ENCODE measurements at regions of chr5 and their contacts with region 1.

Region 1: GRCh38 chr5:5421961-5422818 is at the start of gene ICE1:
- H3K4me3 Mint-ChIP-seq: no peak within 1 kb of the TSS
- H3K27ac Mint-ChIP-seq: peak within 1 kb of the TSS; percentile 96
- H3K4me1 Mint-ChIP-seq: peaks cover 18% of the 10 kb centered on the region
- H3K27me3 Mint-ChIP-seq: peaks cover 2% of the 10 kb centered on the region

Region 2: DNA sequence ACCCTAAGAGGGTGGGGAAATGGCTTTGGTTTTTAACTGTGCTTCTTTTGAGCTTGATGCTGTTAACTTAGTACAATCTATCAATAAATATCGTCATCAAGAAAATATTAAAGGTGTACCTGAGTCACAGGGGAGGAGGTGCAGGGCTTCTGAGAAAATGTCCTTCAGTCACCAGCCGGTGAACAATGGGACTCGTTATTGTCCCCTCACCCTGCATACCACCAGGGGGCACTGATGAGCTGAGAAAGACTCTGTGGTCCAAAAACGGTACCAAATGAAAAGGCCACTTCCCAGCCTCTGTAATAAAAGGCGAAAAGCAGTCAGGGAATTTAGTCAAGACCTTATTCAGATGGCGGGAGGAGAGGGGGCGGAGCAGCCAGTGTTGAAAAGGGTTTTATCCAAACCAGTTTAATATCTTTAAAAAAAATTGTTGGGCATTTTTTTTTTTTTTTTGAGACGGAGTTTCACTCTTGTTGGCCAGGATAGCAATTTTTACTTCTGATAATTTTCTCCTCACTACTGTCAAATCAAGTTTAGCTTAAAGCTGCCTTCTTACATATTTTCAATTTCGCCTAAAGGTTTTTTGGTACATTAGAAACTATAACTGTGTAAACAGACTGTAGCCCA is 554.0 kb before region 1 on chr5:
- intact Hi-C with region 1: loop called (anchors 10 kb)
- H3K4me3 Mint-ChIP-seq: no peak overlapping the region
- H3K27ac Mint-ChIP-seq: no peak overlapping the region
- H3K4me1 Mint-ChIP-seq: no peaks in the 10 kb centered on the region
- H3K27me3 Mint-ChIP-seq: no peaks in the 10 kb centered on the region

Region 3: GRCh38 chr5:5141625-5142532 is 280.3 kb before region 1 on chr5:
- intact Hi-C with region 1: loop called (anchors 1 kb)
- H3K4me3 Mint-ChIP-seq: no peak overlapping the region
- H3K27ac Mint-ChIP-seq: no peak overlapping the region
- H3K4me1 Mint-ChIP-seq: no peaks in the 10 kb centered on the region
- H3K27me3 Mint-ChIP-seq: peaks cover 27% of the 10 kb centered on the region

Region 4: DNA sequence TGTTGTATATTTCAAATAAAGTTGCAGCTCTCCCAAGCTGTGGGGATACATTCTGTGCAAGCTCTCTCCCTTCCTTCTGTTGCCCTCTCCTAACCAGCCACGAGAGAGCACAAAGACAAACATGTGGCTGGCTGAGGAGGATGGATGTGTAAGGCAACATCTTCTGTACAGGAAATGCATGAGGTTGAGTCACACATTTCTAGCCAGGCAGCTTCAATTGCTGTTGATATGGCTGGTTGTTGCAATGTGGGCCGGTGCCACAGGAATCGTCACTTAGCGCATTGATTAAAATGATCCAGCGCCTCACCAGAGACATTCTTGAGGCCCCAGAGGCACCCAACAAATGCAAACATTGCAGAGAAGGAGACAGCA is 207.4 kb after region 1 on chr5:
- intact Hi-C with region 1: no loop called
- H3K4me3 Mint-ChIP-seq: no peak overlapping the region
- H3K27ac Mint-ChIP-seq: no peak overlapping the region
- H3K4me1 Mint-ChIP-seq: no peaks in the 10 kb centered on the region
- H3K27me3 Mint-ChIP-seq: no peaks in the 10 kb centered on the region

Region 5: GRCh38 chr5:6632917-6633468 is 1210.8 kb after region 1 on chr5 and contains the starts of genes NSUN2 and SRD5A1:
- intact Hi-C with region 1: loop called (anchors 2 kb)
- H3K4me3 Mint-ChIP-seq: peak within 1 kb of the TSS; percentile 93
- H3K27ac Mint-ChIP-seq: peak within 1 kb of the TSS; percentile 98
- H3K4me1 Mint-ChIP-seq: peaks cover 40% of the 10 kb centered on the region
- H3K27me3 Mint-ChIP-seq: no peaks in the 10 kb centered on the region

Region 6: DNA sequence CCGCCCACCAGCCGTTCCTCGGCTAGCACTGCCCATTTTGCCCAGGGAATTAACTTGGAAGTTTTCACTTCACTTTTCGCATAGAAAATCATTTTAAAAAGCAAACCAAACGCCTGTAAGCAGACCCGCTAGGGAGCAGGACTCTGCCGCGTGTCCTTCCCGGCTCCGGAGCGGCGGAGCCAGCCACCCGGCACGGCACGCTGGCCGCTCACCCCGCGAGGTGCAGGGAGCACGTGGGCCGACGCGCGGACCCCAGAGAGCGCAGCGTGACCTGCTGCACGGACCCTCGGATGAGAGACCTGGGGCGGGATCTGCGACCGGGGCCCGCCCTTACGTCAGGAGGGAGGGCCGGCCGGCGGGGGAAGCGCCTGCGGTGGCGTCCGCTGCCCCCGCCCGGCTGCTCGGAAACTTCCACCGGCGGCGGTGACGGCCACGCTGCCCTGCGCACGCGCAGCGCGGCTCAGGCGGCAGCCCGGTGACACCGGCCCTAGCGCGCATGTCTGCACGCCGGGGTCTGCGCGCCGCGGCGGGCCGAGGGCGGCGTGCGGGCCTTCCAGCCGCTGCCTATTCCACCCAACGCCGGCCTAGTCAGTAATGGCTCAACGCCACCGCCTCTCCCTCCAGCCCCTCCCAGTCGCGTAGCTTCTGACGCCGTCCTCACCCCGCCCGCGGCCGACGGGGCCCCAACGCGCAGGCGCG is 1290.5 kb after region 1 on chr5:
- intact Hi-C with region 1: loop called (anchors 5 kb)
- H3K4me3 Mint-ChIP-seq: peak overlapping the region; percentile 84
- H3K27ac Mint-ChIP-seq: peak overlapping the region; percentile 93
- H3K4me1 Mint-ChIP-seq: peaks cover 42% of the 10 kb centered on the region
- H3K27me3 Mint-ChIP-seq: peaks cover 8% of the 10 kb centered on the region

Measured in dendritic cell treated with granulocyte-macrophage colony-stimulating factor and Interleukin-4, amounts not matched to agents 40 ng/mL and 50 ng/mL, for 4 days (primary cell).